ENCODE measurements at regions of chrX and their contacts with region 1.

Region 1: GRCh38 chrX:78886550-78886949 is 58.6 kb upstream of the P2RY10 start:
- DNase-seq: no peak
- ATAC-seq: no peak
- H3K4me3 ChIP-seq: no peak overlapping the region
- H3K27ac ChIP-seq: no peak overlapping the region
- H3K4me1 ChIP-seq: no peaks in the 10 kb centered on the region
- H3K27me3 ChIP-seq: no peaks in the 10 kb centered on the region
- CTCF ChIP-seq: peak; percentile 18; the same call in 1 of the 2 replicates
- EP300 ChIP-seq: no peak
- POLR2A ChIP-seq: no peak
- RAD21 ChIP-seq: no peak

Region 2: DNA sequence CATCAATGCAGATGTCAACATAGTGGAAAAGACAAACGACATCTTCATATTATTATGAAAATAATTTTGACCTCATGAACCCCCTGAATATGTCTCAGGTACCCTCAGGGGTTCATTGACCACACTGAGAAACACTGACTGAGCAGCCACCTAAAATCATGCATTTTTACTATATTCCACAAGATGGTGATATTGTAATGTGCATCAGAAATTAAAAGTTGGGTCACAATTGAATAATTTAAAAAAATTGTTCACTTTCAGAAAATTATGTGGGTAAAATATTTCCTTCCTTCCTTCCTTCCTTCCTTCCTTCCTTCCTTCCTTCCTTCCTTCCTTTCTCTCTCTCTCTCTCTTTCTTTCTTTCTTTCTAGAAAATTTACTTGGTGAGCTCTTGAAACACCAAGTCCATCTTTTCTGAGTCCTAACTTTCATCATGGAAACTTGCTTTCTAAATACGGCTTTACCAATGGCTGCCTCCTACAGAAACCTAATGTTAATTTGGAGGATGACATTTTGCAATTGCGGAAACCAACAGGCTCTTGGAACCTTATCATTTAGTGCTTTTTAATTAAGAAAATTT is 331.1 kb before region 1 on chrX:
- CTCF ChIA-PET with region 1: no interaction called
- POLR2A ChIA-PET with region 1: no interaction called
- in situ Hi-C with region 1: no loop called
- intact Hi-C with region 1: loop called (anchors 5 kb)
- DNase-seq: no peak
- ATAC-seq: no peak
- H3K4me3 ChIP-seq: no peak overlapping the region
- H3K27ac ChIP-seq: no peak overlapping the region
- H3K4me1 ChIP-seq: no peaks in the 10 kb centered on the region
- H3K27me3 ChIP-seq: no peaks in the 10 kb centered on the region
- CTCF ChIP-seq: peak; percentile 24; the same call in 1 of the 2 replicates
- EP300 ChIP-seq: no peak
- POLR2A ChIP-seq: no peak
- RAD21 ChIP-seq: no peak

Region 3: DNA sequence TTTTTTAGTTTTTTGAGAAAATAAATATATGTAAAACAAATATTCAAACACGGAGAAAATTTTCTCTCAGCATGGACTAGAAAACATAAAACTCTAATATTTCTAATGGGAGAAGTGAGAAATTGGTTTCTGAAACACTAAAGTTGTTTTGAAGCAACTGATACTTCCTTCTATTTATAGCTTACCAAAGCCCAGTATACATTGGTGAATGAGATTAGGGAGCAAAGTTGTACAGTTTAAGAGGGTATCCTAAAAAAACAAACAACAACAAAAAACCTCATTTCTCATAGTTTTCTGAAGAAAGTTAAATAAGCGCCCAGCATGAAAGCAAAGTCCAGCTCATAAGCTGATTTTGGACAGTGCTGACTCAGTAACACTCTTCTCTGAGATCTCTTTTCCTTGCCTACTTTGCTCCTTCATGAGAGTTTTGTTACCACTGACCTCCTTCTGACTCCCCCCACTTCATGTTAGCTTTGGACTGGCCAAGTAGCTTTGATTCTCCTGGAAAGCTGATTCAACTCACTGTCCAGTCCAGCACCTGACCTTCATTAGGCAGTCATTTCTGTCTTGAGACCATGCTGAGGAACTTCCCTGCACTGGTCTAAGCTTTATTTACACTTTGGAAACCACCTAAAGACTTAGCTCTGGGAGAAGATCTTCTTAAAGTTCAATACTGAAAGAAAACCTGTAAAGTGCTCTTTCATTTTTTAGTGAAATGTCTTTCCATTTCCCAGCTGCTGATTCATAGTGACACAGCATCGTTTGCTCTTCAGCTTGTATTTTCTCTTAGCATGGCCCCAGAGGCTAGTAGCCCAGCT is 36.9 kb after region 1 on chrX:
- CTCF ChIA-PET with region 1: no interaction called
- POLR2A ChIA-PET with region 1: no interaction called
- in situ Hi-C with region 1: no loop called
- intact Hi-C with region 1: no loop called
- DNase-seq: no peak
- ATAC-seq: no peak
- H3K4me3 ChIP-seq: no peak overlapping the region
- H3K27ac ChIP-seq: no peak overlapping the region
- H3K4me1 ChIP-seq: no peaks in the 10 kb centered on the region
- H3K27me3 ChIP-seq: no peaks in the 10 kb centered on the region
- CTCF ChIP-seq: no peak
- EP300 ChIP-seq: no peak
- POLR2A ChIP-seq: no peak
- RAD21 ChIP-seq: no peak

Region 4: GRCh38 chrX:78957768-78958130 is 71.2 kb after region 1 on chrX:
- CTCF ChIA-PET with region 1: no interaction called
- POLR2A ChIA-PET with region 1: no interaction called
- in situ Hi-C with region 1: no loop called
- intact Hi-C with region 1: no loop called
- DNase-seq: no peak
- ATAC-seq: no peak
- H3K4me3 ChIP-seq: no peak overlapping the region
- H3K27ac ChIP-seq: no peak overlapping the region
- H3K4me1 ChIP-seq: no peaks in the 10 kb centered on the region
- H3K27me3 ChIP-seq: no peaks in the 10 kb centered on the region
- CTCF ChIP-seq: no peak
- EP300 ChIP-seq: no peak
- POLR2A ChIP-seq: no peak
- RAD21 ChIP-seq: no peak